Right ventricle myocardium superior (tissue), 1 donor: ENCODE measurements at regions of chr17 and their contacts with region 1.

Region 1: DNA sequence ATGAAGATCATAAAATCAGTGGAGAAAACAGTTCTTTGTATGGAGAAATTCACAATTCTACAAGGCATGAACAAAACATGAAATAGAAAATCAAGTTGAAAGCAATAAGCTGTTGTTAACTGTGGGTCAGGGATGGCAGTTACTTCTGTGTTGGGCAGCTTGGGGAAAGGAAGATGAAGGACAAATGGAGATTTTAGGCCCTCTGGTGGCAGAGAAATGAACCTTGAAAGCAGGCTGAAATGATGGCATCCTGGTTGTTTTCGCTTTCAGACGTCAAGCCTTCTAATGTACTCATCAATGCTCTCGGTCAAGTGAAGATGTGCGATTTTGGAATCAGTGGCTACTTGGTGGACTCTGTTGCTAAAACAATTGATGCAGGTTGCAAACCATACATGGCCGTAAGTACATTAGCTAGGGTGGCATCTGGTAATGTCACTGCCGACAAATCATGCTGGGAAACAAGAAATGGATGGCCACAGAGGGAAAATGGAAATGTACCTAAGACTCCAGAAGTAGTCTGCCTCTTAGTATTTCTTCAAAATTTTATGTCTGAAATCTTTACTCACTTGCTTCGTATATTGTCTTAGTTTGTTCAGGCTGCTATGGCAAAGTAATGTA is 108.9 kb downstream of the MAP2K6 start:
- DNase-seq: no peak
- ATAC-seq: peak; percentile 80

Region 2: GRCh38 chr17:69335058-69335457 is 188.3 kb before region 1 on chr17:
- intact Hi-C with region 1: loop called (anchors 5 kb)
- DNase-seq: no peak
- ATAC-seq: peak; percentile 69

Region 3: GRCh38 chr17:69637446-69638156 is 114.2 kb after region 1 on chr17:
- intact Hi-C with region 1: no loop called
- DNase-seq: no peak
- ATAC-seq: no peak

Region 4: GRCh38 chr17:69716556-69716955 is 193.2 kb after region 1 on chr17:
- intact Hi-C with region 1: no loop called
- DNase-seq: no peak
- ATAC-seq: no peak

Region 5: GRCh38 chr17:70552230-70552981 is 1029.1 kb after region 1 on chr17:
- intact Hi-C with region 1: loop called (anchors 10 kb)
- DNase-seq: no peak
- ATAC-seq: peak; percentile 88

Region 6: DNA sequence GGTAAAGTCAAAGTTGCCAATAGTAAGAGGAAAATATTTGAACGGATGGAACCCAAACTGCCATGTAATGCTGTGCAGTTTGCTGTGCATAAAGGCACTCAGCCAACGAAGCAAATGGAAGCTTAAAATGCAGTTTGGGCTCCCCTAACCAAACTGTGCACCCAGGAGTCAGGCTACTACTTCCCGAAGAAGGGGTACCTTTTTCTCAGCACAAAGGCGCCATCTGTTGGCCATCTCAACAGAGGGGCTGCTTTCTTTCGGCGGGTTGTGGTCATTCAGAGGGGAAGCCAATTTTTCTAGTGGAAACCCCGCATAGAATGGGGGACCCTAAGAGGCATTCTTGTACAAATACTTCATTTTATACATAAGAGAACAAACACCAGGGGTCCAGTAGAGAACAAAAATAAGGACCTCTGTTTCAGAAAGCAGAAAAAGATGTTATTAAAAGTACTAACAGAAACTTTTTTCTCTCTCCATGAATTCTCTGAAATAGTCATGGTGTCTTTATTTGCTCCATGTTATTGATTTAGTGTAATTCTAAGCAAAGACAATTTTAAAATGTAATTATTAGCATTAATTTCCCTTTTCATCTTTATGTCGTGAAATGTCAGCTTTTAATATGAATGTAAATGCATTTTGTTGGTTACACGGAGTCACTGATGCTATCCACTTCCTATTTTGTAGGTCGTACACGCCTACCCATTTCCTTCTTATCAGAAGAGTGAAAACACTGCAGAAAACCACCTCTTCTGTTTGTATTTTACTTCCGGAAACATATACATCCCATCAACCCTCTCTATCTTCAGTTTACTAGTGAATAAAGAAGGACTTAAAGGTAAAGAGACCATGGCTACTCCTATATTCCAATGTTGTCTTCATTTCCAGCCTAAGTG is 1099.3 kb after region 1 on chr17:
- intact Hi-C with region 1: loop called (anchors 10 kb)
- DNase-seq: peak; percentile 46
- ATAC-seq: peak; percentile 92